GM10248 (cell line): ENCODE measurements at regions of chr16 and their contacts with region 1.

Region 1: DNA sequence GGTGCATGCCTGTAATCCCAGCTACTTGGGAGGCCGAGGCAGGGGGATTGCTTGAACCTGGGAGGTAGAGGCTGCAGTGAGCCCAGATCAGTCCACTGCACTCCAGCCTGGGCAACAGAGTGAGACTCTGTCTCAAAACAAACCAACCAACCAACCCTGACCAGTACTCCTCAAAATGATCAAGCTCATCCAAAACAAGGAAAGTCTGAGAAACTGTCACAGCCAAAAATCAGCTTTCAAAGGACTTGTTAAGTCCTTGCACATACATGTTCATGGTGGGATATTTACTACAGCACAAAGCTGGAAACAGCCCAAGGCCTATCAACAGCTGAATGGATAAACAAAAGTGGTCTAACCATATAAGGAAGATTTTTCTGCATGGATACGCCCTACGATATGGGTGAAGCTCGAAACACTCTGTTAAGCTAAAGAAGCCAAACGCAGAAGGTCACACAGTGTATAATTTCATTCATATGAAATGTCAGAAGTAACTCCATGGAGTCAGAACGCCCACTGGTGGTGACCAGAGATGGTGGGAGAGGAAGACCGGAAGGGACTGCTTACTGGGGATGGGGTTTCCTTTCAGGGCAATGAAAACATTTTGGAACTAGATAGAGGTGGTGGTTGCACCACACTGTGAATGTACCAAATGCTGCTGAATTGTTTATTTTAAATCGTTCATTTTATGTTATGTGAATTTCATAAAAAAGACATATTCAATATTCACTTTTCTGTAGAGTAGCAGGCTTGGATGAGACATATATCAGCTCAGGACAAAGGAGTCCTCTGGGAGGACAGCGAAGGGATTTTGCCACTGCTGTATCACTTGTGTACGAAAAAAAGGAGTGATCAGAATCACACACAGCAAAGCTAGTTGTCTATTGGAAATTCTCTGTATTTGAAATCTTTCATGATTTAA is 17.7 kb downstream of the CCL17 start:
- DNase-seq: no peak
- CTCF ChIP-seq: peak; percentile 43

Region 2: GRCh38 chr16:57300387-57301125 is 121.7 kb before region 1 on chr16:
- CTCF ChIA-PET with region 1: interaction called, 454 read pairs
- POLR2A ChIA-PET with region 1: interaction called, 3 read pairs
- DNase-seq: peak; percentile 95
- CTCF ChIP-seq: peak; percentile 96

Region 3: DNA sequence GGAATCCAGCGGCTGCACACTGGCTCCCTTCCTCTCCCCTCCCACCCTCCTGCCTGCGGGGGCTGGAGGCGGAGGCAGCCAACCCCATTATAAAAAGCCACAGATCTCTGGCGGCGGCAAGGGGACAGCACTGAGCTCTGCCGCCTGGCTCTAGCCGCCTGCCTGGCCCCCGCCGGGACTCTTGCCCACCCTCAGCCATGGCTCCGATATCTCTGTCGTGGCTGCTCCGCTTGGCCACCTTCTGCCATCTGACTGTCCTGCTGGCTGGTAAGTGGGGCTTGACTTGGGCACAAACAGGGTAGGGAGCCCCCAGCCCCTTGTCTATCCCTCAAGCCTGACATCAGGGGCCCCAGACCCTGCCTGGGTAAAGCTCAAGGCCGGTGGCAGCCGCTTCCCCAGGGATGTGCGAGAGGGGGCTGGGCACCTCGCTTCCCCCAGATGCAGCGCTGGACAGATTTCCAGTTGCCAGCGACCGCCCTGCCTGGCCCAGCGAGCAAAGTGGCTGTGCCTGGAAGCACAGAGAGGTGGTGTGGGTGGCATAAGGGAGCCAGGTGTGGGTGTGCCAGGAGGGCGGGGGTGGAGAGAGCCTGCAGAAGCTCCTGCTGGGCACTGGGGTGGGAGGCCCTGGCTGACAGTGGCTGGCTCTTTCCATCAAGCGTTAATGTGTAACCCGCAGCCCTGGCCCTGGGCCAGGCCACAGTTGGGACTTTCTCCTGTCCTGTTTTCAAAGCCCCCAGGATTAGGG is 49.7 kb before region 1 on chr16 and contains the start of gene CX3CL1:
- CTCF ChIA-PET with region 1: interaction called, 87 read pairs
- POLR2A ChIA-PET with region 1: no interaction called
- DNase-seq: no peak
- CTCF ChIP-seq: no peak

Region 4: DNA sequence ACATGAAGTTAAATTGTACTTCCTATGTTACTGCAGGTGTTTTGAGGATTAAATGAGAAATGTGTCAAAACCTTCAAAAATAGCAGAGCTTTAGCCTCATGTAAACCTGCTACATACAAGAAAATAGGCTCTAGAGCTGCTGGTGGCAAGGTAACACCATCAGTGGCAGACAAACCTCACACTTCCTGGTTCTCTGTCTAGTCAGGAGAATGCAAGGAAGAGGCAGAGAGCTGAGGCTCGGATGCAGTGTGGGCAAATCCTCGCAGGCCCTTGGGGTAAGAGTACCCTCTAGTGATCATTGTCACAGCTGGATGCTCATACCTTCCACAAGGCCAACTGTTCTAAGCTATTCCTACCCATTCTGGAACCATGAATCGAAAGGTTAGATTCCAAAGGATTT is 10.7 kb after region 1 on chr16:
- CTCF ChIA-PET with region 1: interaction called, 49 read pairs
- POLR2A ChIA-PET with region 1: no interaction called
- DNase-seq: no peak
- CTCF ChIP-seq: no peak

Region 5: DNA sequence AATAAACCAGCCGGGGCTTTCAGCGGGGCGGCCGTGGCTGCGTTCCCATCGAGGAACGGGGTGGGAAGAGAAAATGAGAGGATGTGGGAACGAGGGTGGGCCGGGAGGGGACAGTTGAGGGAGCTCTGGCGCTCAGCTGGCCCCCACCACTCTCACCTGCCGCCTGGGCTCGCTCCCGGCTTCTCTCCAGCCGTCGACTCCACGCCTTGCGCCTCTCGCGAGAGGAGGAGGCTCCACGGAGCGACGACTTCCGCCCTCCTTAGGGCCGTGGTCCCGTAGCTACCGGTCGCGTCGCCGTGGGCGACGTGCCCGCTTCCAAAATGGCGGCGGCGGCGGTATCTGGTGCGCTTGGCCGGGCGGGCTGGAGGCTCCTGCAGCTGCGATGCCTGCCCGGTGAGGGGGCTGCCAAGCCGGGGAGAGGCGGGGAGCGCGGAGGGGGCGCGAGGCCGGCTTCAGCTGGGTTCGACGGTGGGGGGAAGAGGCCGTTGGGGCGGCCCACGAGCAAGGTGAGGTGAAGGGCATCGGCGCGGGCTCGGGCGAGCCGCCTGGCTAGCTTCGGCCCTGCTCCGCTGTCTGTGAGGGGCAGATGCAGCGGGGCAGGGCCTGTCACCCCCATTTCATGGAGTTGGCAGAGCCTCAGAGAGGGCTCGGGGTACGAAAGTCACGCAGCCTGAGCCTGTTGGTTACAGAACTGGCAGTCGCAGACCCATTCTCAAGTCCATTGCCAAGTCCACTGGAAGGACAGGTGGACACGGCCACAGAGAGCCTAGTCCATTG is 25.1 kb after region 1 on chr16 and contains the starts of genes CIAPIN1 and COQ9:
- CTCF ChIA-PET with region 1: interaction called, 45 read pairs
- POLR2A ChIA-PET with region 1: no interaction called
- DNase-seq: peak; percentile 98
- CTCF ChIP-seq: no peak

Region 6: DNA sequence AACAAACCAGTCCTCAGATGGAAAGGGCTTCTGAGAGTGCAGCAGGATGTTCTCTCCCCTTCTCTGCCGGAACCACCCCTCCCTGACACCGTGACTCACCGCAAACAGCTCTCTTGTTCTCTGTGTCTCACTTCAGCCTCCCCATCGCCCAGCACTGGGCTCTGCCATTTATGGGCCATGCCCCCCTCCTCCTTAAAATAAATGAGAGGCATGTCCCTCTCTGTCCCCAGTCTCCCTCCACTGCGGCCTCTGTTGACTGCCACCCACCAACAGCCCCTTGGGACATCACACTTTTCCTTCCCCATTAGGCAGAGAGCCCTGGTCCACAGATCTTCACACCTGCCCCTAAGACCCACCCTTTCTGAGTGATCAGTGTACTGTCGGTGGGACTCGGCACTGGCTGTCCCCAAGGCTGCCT is 107.8 kb after region 1 on chr16:
- CTCF ChIA-PET with region 1: interaction called, 11 read pairs
- POLR2A ChIA-PET with region 1: no interaction called
- DNase-seq: peak; percentile 77
- CTCF ChIP-seq: no peak